ENCODE measurements at regions of chr17 and their contacts with region 1.

Region 1: GRCh38 chr17:73371285-73371684 is 59.5 kb upstream of the CDC42EP4 start:
- DNase-seq: no peak
- H3K4me3 Mint-ChIP-seq: no peak overlapping the region
- H3K27ac Mint-ChIP-seq: no peak overlapping the region
- H3K4me1 Mint-ChIP-seq: no peaks in the 10 kb centered on the region
- H3K27me3 Mint-ChIP-seq: peaks cover 6% of the 10 kb centered on the region

Region 2: GRCh38 chr17:73068322-73069153 is 302.7 kb before region 1 on chr17:
- CTCF ChIA-PET with region 1: no interaction called
- POLR2A ChIA-PET with region 1: no interaction called
- intact Hi-C with region 1: no loop called
- DNase-seq: no peak
- H3K4me3 Mint-ChIP-seq: no peak overlapping the region
- H3K27ac Mint-ChIP-seq: no peak overlapping the region
- H3K4me1 Mint-ChIP-seq: peaks cover 3% of the 10 kb centered on the region
- H3K27me3 Mint-ChIP-seq: no peaks in the 10 kb centered on the region

Region 3: DNA sequence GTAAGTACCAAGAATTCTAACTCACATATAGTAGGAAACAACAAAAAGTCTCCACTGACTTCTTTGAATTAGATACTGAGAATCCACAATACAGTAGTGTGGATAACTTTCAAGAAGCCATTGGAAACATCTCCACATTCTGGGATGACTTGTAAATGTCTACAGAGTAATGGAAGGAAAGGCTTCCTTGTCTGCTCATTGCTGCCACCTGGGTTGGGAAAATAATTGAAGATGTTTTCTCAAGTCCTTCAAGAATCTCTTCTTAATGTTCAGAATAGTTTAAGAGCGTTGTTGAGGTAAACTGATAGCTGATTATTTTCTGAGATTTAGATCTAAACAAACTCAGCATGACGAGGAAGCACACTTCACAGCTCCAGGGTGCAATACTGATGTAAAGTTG is 123.6 kb before region 1 on chr17:
- CTCF ChIA-PET with region 1: interaction called, 170 read pairs
- POLR2A ChIA-PET with region 1: no interaction called
- intact Hi-C with region 1: no loop called
- DNase-seq: no peak
- H3K4me3 Mint-ChIP-seq: no peak overlapping the region
- H3K27ac Mint-ChIP-seq: no peak overlapping the region
- H3K4me1 Mint-ChIP-seq: no peaks in the 10 kb centered on the region
- H3K27me3 Mint-ChIP-seq: no peaks in the 10 kb centered on the region

Region 4: DNA sequence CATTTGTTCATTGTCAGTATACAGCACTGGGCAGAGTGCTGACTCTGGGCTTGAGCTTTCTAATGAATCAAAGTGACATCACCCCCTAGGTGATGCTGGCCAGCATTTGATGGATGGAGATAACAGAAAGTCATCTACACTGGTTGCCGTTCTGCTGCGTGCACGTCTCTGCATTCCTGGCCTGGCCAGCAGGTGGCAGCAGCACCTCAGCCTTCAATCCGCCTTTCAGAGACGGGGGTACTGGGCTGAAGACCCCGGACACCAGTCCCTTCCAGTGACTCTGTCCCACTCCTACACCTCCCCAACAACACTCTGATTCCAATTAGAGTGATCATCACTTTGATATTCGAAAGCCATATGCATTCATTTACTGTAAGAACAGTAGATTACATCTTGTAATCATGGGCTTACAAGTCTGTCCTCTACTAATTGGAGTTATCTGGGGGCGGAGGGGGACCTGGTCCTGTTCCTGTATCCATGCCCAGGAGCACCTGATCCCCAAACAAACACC is 115.6 kb before region 1 on chr17:
- CTCF ChIA-PET with region 1: interaction called, 170 read pairs
- POLR2A ChIA-PET with region 1: no interaction called
- intact Hi-C with region 1: loop called (anchors 1 kb)
- DNase-seq: peak; percentile 65
- H3K4me3 Mint-ChIP-seq: no peak overlapping the region
- H3K27ac Mint-ChIP-seq: no peak overlapping the region
- H3K4me1 Mint-ChIP-seq: peaks cover 3% of the 10 kb centered on the region
- H3K27me3 Mint-ChIP-seq: no peaks in the 10 kb centered on the region

Region 5: GRCh38 chr17:73956669-73957465 is 585.6 kb after region 1 on chr17:
- CTCF ChIA-PET with region 1: no interaction called
- POLR2A ChIA-PET with region 1: no interaction called
- intact Hi-C with region 1: no loop called
- DNase-seq: peak; percentile 65
- H3K4me3 Mint-ChIP-seq: no peak overlapping the region
- H3K27ac Mint-ChIP-seq: no peak overlapping the region
- H3K4me1 Mint-ChIP-seq: peaks cover 3% of the 10 kb centered on the region
- H3K27me3 Mint-ChIP-seq: peaks cover 3% of the 10 kb centered on the region

Measured in activated CD4-positive, alpha-beta memory T cell treated with anti-CD3 and anti-CD28 coated beads for 36 hours (primary cell).